B cell (primary cell): ENCODE measurements at regions of chr3 and their contacts with region 1.

Region 1: DNA sequence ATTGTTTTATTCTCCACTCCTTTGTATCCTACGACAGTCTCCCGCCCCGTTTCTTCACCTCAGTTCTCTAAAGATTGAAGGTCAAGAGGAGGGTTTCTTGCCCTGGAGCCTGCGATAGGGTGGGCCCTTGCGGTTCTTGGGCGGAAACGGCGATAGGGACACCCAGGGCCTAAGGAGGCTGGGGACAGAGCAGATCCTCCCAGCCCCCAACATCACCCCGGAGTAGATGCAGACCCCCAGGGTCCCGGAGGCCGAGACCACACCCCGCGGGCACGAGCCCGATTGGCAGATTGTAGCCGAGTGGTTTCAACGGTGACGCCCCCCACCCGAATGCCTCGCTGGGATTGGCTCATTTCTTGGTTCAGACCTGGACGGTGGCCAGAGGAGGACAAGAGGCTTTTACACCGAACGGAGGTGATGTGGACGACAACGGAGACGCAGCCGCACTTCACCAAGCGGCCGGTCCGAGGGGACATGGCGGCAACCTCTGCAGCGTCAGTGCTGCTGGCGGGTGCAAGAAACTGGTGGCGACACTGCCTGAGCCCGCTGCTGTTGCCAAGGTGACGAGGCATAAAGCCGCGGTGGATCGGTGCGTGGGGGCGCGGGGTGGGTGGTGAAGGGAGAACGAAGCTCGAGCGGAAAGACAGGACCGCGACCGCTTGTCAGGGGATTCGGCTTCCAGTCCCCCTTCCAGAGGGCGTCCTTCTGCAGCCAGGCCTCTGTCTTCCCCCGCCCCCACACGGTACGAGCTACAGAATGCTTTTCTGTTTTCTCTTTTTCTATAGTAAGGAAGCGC is 19.0 kb upstream of the MCF2L2 start:
- DNase-seq: peak; percentile 69
- ATAC-seq: peak; percentile 95
- H3K4me3 ChIP-seq: peak overlapping the region; percentile 71 to 91 (median 83)
- H3K4me3 Mint-ChIP-seq: peak overlapping the region; percentile 95
- H3K27ac ChIP-seq: peak overlapping the region; percentile 8 to 53
- H3K27ac Mint-ChIP-seq: peak overlapping the region; percentile 80
- H3K4me1 ChIP-seq: peaks cover 8 to 10% of the 10 kb centered on the region in 2 donors
- H3K4me1 Mint-ChIP-seq: peaks cover 26% of the 10 kb centered on the region
- H3K27me3 ChIP-seq: peaks cover 0 to 6% (median 0%) of the 10 kb centered on the region in 4 experiments
- H3K27me3 Mint-ChIP-seq: no peaks in the 10 kb centered on the region
- CTCF ChIP-seq: no peak

Region 2: DNA sequence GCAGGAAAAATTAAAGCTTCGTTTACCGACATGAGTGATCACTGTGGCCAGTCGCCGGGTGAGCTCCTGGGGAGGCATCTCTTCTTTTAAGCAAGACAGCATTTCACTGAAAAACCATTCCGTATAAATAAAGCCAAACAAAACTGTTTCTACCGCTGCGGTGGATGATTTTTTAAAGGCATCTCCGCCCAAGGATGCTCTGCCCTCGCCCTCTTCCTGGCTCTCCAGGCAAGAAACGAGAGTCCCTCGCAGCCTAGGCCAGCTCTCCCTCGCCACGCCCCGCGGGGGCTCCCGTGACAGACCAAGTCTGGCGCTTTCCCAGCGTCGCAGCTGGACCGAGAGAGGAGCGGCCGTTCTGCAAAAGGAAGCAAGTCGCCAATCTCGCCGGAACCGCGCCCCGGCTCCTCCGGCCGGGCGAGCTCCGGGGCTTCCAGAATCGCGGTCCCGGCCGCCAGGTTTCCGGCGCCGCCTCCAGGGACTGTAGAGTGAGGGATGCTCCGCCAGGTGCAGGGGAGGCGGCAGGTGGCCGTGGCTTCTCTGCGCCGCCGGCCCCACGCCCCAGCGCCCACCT is 19.4 kb before region 1 on chr3:
- CTCF ChIA-PET with region 1: no interaction called
- POLR2A ChIA-PET with region 1: no interaction called
- intact Hi-C with region 1: loop called (anchors 2 kb)
- DNase-seq: no peak
- ATAC-seq: peak; percentile 44
- H3K4me3 ChIP-seq: peak overlapping the region in 4 of 5 experiments; percentile 54 to 74 (median 62)
- H3K4me3 Mint-ChIP-seq: peak overlapping the region; percentile 90
- H3K27ac ChIP-seq: no peak overlapping the region
- H3K27ac Mint-ChIP-seq: no peak overlapping the region
- H3K4me1 ChIP-seq: peaks cover 13 to 18% of the 10 kb centered on the region in 2 donors
- H3K4me1 Mint-ChIP-seq: peaks cover 11% of the 10 kb centered on the region
- H3K27me3 ChIP-seq: peaks cover 0 to 53% (median 23%) of the 10 kb centered on the region in 4 experiments
- H3K27me3 Mint-ChIP-seq: peaks cover 29% of the 10 kb centered on the region
- CTCF ChIP-seq: no peak